Activated CD4-positive, alpha-beta memory T cell treated with anti-CD3 and anti-CD28 coated beads, Interleukin-2, amount 10 ng/mL, durations not matched to agents 7 days and 5 days (primary cell): ENCODE measurements at regions of chr1 and their contacts with region 1.

Region 1: DNA sequence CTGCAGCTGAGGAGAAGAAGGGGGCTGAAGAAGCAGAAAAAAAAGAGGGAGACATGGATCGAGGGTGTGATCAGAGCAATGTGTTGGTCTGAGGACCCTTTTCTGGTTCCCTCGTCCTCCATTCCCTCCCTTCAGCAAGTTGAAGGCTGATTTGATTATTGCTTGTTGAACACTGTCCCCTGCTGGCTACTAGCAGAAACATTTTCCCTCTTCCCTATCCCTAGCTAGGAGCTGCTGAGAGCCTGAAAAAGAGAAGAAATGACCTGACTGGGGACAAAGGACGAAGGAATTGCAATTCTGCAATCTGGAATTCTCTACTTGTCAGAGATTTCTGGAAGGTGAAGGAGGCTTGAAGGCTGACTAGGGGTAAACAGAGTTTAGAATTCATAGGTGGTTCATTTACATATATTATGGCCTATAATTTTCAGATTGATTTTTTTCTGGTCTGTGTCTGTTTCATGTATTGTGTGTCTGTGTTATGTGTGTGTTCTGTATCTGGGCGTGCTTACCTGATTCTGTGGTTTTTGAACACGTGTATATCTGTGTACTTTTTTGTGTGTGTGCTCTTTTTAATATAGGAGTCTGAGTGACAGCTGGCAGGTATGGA is 9.8 kb downstream of the NHLH1 start:
- DNase-seq: peak; percentile 38
- H3K4me3 Mint-ChIP-seq: no peak overlapping the region
- H3K27ac Mint-ChIP-seq: no peak overlapping the region
- H3K4me1 Mint-ChIP-seq: peaks cover 14% of the 10 kb centered on the region
- H3K27me3 Mint-ChIP-seq: peaks cover 8% of the 10 kb centered on the region

Region 2: DNA sequence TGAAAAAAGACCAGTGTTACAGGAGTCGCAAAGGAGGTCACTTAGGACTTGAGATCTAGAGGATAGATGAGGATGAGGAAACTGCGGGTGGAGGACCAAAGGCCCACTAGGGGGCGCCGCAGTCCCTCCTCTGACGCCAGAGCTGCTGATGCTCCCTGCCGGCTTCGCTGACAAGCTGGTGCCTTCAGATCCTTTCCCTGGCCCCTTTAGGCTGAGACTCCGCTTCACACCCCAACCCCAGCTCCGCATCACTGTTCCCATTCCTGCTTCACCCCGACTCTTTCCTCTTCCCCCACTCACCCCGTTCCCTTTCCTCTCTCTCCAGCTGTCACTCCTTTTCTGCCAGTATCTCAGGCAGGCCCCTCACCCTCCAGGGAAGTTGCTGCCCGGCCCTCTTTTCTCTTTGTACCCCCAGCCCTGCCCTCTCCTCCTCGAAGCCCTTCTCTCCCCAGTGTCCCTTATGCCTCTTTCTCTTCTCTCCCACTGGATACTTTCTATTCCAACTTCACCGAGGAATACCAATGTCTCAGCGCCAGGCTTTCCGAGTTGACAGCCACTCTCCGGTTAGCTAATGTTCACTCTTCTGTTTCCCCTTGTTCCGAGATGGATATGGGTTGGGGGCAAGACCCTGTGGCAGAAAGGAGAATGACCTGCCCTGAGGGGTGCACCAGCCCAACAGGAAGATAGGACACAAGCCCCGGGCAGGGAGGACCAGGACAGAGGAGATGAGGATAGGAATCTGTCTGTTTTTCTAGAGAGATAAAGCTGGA is 290.8 kb before region 1 on chr1:
- CTCF ChIA-PET with region 1: interaction called, 18 read pairs
- POLR2A ChIA-PET with region 1: no interaction called
- DNase-seq: peak; percentile 77
- H3K4me3 Mint-ChIP-seq: no peak overlapping the region
- H3K27ac Mint-ChIP-seq: no peak overlapping the region
- H3K4me1 Mint-ChIP-seq: peaks cover 9% of the 10 kb centered on the region
- H3K27me3 Mint-ChIP-seq: peaks cover 27% of the 10 kb centered on the region

Region 3: GRCh38 chr1:160098852-160099561 is 277.6 kb before region 1 on chr1:
- CTCF ChIA-PET with region 1: interaction called, 24 read pairs
- POLR2A ChIA-PET with region 1: no interaction called
- DNase-seq: peak; percentile 98
- H3K4me3 Mint-ChIP-seq: peak overlapping the region; percentile 69
- H3K27ac Mint-ChIP-seq: peak overlapping the region; percentile 75
- H3K4me1 Mint-ChIP-seq: peaks cover 38% of the 10 kb centered on the region
- H3K27me3 Mint-ChIP-seq: no peaks in the 10 kb centered on the region

Region 4: DNA sequence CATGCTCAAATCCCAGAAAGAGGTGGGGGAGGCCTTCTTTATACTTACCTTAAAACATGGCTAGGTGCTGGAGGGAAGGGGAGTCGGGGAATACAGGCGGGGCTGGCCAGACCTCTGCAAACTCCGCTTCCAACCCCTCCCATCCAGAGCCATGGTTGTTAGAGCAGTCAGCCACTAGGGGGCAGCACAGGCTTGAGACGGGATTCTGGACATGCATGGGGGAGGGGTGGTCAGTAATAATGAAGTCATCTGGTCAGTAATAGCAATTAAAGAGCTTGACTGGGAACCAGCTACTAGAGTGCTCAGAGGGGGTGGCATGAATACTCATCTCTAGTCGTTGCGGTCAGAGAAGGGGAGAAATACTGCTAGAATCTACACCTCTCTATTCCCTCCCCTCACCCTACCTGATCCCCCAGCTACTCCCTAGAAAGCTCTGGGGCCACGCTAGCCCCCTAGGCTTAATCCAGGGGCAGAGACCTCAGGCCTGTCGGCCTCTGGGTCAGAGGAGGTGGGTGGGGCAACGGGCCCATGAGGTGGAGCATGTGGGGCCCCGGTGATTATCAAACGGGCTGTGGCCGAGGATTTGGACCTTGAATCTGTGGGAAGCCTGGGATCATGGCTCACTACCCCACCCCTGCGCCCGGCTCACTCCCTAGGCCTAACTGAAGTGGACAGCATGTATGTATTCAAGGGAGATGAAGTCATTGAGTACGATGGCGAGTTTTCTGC is 183.4 kb before region 1 on chr1:
- CTCF ChIA-PET with region 1: interaction called, 10 read pairs
- POLR2A ChIA-PET with region 1: no interaction called
- DNase-seq: peak; percentile 81
- H3K4me3 Mint-ChIP-seq: no peak overlapping the region
- H3K27ac Mint-ChIP-seq: no peak overlapping the region
- H3K4me1 Mint-ChIP-seq: no peaks in the 10 kb centered on the region
- H3K27me3 Mint-ChIP-seq: peaks cover 2% of the 10 kb centered on the region

Region 5: DNA sequence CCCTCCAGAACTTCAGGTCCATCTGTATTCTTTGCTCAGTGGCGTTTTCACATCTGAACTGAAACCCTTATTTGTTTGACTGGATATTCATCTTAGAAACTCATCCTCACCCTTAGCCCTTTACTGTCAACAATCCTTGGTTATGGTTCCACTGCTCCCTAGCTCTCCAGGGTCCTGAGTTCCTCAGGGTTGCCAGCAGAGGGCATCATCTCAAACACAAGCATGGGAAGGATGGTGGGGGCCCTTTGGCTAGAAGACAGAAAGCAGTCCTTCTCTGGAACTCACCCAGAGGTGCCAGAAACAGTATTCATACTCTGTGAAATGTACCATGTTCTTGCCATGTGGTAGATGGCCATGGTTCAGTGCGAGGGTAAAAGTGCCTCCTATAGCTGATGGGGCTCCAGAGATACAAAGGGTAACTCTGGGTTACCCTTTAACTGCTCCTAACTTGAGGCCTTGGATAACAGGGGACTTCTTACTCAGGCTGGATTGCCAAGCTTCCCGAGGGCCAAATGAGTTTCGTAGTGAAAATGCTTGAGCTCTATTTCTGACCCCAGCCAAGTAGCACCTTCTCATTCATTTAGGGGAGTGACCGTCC is 22.1 kb before region 1 on chr1:
- CTCF ChIA-PET with region 1: interaction called, 20 read pairs
- POLR2A ChIA-PET with region 1: interaction called, 3 read pairs
- DNase-seq: no peak
- H3K4me3 Mint-ChIP-seq: no peak overlapping the region
- H3K27ac Mint-ChIP-seq: no peak overlapping the region
- H3K4me1 Mint-ChIP-seq: peaks cover 10% of the 10 kb centered on the region
- H3K27me3 Mint-ChIP-seq: no peaks in the 10 kb centered on the region

Region 6: DNA sequence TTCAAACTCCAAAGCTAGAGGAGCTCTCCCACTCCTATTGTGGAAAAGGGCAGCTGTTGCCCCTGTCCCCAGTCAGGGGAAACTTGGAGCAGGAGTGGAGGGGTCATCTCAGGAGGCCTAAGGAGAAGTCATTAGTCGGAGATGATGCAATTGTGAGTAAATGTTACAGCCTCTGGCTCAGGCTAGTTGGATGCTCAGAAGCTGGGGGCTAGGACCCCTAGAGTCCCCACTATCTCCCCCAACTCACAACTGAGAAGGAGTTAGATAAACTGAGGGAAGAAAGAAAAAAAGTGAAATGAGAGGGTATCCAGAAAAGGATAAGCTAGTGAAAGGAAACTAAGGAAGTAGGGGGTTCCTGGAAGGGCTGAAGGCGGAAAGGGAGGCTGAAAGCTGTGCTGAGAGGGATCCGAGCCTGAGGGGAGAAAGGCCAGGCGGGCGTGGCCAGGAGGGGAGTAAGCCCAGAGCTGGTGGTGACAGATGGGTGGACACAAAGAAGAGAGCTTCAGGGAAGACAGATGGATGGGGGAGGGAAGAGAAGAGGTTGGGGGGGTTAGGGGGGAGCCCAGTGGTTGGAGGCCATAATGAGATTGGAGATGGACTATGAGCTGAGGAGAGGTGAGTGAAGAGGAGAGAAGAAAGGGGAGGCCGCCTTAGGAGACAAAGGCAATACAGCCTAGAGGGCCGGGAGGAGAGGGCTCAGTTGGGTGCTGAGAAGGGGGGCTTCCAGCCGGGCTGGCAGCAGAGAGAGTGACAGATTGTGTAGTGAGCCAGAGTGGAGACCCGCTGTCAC is 14.3 kb before region 1 on chr1:
- CTCF ChIA-PET with region 1: interaction called, 23 read pairs
- POLR2A ChIA-PET with region 1: interaction called, 3 read pairs
- DNase-seq: no peak
- H3K4me3 Mint-ChIP-seq: no peak overlapping the region
- H3K27ac Mint-ChIP-seq: peak overlapping the region; percentile 18
- H3K4me1 Mint-ChIP-seq: no peaks in the 10 kb centered on the region
- H3K27me3 Mint-ChIP-seq: no peaks in the 10 kb centered on the region